Caco-2 (cell line): ENCODE measurements at regions of chr12 and their contacts with region 1.

Region 1: GRCh38 chr12:42129595-42130204 is 15.0 kb downstream of the GXYLT1 start:
- DNase-seq: peak; percentile 63 to 75
- H3K4me3 ChIP-seq: no peak overlapping the region
- H3K4me3 Mint-ChIP-seq: no peak overlapping the region
- H3K27ac Mint-ChIP-seq: no peak overlapping the region
- H3K4me1 ChIP-seq: peaks cover 43% of the 10 kb centered on the region
- H3K4me1 Mint-ChIP-seq: no peaks in the 10 kb centered on the region
- H3K27me3 ChIP-seq: no peaks in the 10 kb centered on the region
- H3K27me3 Mint-ChIP-seq: no peaks in the 10 kb centered on the region
- CTCF ChIP-seq: peak; percentile 74 to 91

Region 2: GRCh38 chr12:42156232-42156631 is 26.5 kb after region 1 on chr12:
- CTCF ChIA-PET with region 1: no interaction called
- POLR2A ChIA-PET with region 1: no interaction called
- intact Hi-C with region 1: no loop called
- DNase-seq: no peak
- H3K4me3 ChIP-seq: no peak overlapping the region
- H3K4me3 Mint-ChIP-seq: no peak overlapping the region
- H3K27ac Mint-ChIP-seq: no peak overlapping the region
- H3K4me1 ChIP-seq: no peaks in the 10 kb centered on the region
- H3K4me1 Mint-ChIP-seq: no peaks in the 10 kb centered on the region
- H3K27me3 ChIP-seq: no peaks in the 10 kb centered on the region
- H3K27me3 Mint-ChIP-seq: no peaks in the 10 kb centered on the region
- CTCF ChIP-seq: no peak

Region 3: GRCh38 chr12:42221726-42222125 is 92.0 kb after region 1 on chr12:
- CTCF ChIA-PET with region 1: no interaction called
- POLR2A ChIA-PET with region 1: no interaction called
- intact Hi-C with region 1: loop called (anchors 5 kb)
- DNase-seq: no peak
- H3K4me3 ChIP-seq: no peak overlapping the region
- H3K4me3 Mint-ChIP-seq: no peak overlapping the region
- H3K27ac Mint-ChIP-seq: no peak overlapping the region
- H3K4me1 ChIP-seq: peaks cover 6% of the 10 kb centered on the region; the same call in 1 of the 2 replicates
- H3K4me1 Mint-ChIP-seq: no peaks in the 10 kb centered on the region
- H3K27me3 ChIP-seq: no peaks in the 10 kb centered on the region
- H3K27me3 Mint-ChIP-seq: no peaks in the 10 kb centered on the region
- CTCF ChIP-seq: no peak

Region 4: GRCh38 chr12:42284157-42284556 is 154.5 kb after region 1 on chr12:
- CTCF ChIA-PET with region 1: no interaction called
- POLR2A ChIA-PET with region 1: no interaction called
- intact Hi-C with region 1: loop called (anchors 5 kb)
- DNase-seq: no peak
- H3K4me3 ChIP-seq: no peak overlapping the region
- H3K4me3 Mint-ChIP-seq: no peak overlapping the region
- H3K27ac Mint-ChIP-seq: no peak overlapping the region
- H3K4me1 ChIP-seq: peaks cover 20% of the 10 kb centered on the region
- H3K4me1 Mint-ChIP-seq: peaks cover 7% of the 10 kb centered on the region
- H3K27me3 ChIP-seq: peaks cover 1% of the 10 kb centered on the region; the same call in 1 of the 2 replicates
- H3K27me3 Mint-ChIP-seq: peaks cover 3% of the 10 kb centered on the region
- CTCF ChIP-seq: no peak

Region 5: GRCh38 chr12:42372154-42372791 is 242.6 kb after region 1 on chr12:
- CTCF ChIA-PET with region 1: interaction called, 4 read pairs
- POLR2A ChIA-PET with region 1: no interaction called
- intact Hi-C with region 1: loop called (anchors 1 kb)
- DNase-seq: peak in 1 of 2 experiments; percentile 70
- H3K4me3 ChIP-seq: no peak overlapping the region
- H3K4me3 Mint-ChIP-seq: no peak overlapping the region
- H3K27ac Mint-ChIP-seq: no peak overlapping the region
- H3K4me1 ChIP-seq: no peaks in the 10 kb centered on the region
- H3K4me1 Mint-ChIP-seq: peaks cover 16% of the 10 kb centered on the region
- H3K27me3 ChIP-seq: no peaks in the 10 kb centered on the region
- H3K27me3 Mint-ChIP-seq: no peaks in the 10 kb centered on the region
- CTCF ChIP-seq: peak; percentile 81 to 85